A549 (cell line): ENCODE measurements at regions of chr14 and their contacts with region 1.

Region 1: GRCh38 chr14:75088574-75089373 is 19.3 kb downstream of the ZC2HC1C start:
- DNase-seq: peak; percentile 43 to 63
- ATAC-seq: peak; percentile 90 to 94
- H3K4me3 ChIP-seq: no peak overlapping the region
- H3K27ac ChIP-seq: no peak overlapping the region
- H3K4me1 ChIP-seq: no peaks in the 10 kb centered on the region
- CTCF ChIP-seq: peak; percentile 86
- EP300 ChIP-seq: no peak
- POLR2A ChIP-seq: no peak
- RAD21 ChIP-seq: peak; percentile 84 to 93

Region 2: DNA sequence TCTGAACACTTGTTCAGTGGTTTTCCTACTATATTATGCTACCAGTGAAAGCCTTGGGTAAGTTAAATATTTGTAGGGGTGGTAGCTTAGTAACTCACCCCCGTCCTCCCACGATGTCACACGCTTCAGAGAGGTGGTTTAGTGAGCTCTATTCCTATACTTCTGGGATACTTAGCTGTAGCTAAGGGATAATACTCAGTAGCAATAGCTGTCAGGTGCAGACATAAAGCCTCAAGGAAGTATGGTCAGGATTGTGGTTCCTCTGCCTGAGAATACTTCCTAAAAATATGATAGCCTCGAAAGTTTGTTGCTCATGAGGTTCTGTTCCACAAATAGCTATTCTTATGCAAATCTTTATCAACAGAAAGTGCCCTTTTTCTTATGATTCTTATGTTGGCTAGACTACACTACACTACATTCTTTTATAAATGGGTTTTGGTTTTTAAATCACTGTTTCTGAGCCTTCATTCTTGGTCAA is 195.1 kb before region 1 on chr14:
- CTCF ChIA-PET with region 1: interaction called, 10 read pairs
- POLR2A ChIA-PET with region 1: no interaction called
- DNase-seq: no peak
- ATAC-seq: no peak
- H3K4me3 ChIP-seq: no peak overlapping the region
- H3K27ac ChIP-seq: no peak overlapping the region
- H3K4me1 ChIP-seq: peaks cover 3% of the 10 kb centered on the region
- CTCF ChIP-seq: no peak
- EP300 ChIP-seq: no peak
- POLR2A ChIP-seq: no peak
- RAD21 ChIP-seq: no peak

Region 3: GRCh38 chr14:74922739-74923401 is 165.9 kb before region 1 on chr14 and contains the start of gene RPS6KL1:
- CTCF ChIA-PET with region 1: interaction called, 15 read pairs
- POLR2A ChIA-PET with region 1: no interaction called
- DNase-seq: peak; percentile 57 to 80
- ATAC-seq: peak; percentile 76 to 95
- H3K4me3 ChIP-seq: peak within 1 kb of the TSS; percentile 35
- H3K27ac ChIP-seq: peak within 1 kb of the TSS in 1 of 2 experiments; percentile 48; a peak in 2 of 6 replicates
- H3K4me1 ChIP-seq: no peaks in the 10 kb centered on the region
- CTCF ChIP-seq: no peak
- EP300 ChIP-seq: no peak
- POLR2A ChIP-seq: no peak
- RAD21 ChIP-seq: no peak
- polyA plus RNA-seq, gene RPS6KL1: 0.32 and 0.40 TPM in 2 replicates

Region 4: DNA sequence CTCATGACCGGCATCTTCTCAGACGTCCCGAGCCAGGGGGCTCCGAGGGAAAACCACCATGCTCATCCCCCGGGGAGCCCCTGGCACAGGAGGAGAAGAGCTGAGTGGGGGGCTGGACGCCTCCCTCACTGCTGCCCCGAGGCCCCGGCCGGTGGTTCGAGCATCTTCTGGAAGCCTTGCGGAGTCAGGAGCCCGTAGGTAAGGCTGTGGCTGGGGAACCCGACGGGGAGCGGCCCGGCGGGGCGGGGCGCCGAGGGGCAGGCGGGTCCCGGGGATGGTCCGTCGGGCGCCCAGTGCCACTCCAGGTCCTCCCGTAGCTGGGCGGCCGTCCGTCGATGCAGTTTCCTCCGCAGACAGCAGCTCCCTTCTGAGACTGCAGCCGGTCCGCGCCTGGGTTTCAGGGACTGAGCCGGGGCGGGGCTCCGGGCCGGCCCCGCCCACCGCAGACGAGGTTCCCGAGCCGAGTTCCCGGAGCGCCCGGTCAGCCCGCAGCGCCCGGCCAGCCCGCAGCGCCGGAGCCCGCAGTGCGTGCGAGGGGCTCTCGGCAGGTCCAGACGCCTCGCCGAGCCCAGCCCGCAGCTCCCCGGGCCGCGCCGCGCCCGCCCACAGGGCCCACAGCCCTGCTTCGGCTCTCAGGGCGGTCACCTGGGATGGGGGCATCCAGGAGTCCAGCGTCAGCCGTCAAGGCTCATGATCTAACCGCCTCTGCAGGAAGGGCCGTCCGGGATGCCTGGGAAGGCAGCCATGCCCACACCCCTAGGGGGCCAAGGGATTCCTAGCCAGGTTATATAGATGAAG is 133.3 kb before region 1 on chr14 and contains the start of gene PGF:
- CTCF ChIA-PET with region 1: interaction called, 24 read pairs
- POLR2A ChIA-PET with region 1: no interaction called
- DNase-seq: peak; percentile 30 to 50
- ATAC-seq: peak; percentile 77 to 89
- H3K4me3 ChIP-seq: peak within 1 kb of the TSS; percentile 60
- H3K27ac ChIP-seq: peak within 1 kb of the TSS; percentile 60 to 80; a peak in 5 of 6 replicates
- H3K4me1 ChIP-seq: peaks cover 11% of the 10 kb centered on the region
- CTCF ChIP-seq: no peak
- EP300 ChIP-seq: no peak
- POLR2A ChIP-seq: peak; percentile 64
- RAD21 ChIP-seq: no peak
- polyA plus RNA-seq, gene PGF: 0.52 and 0.63 TPM in 2 replicates

Region 5: GRCh38 chr14:75022655-75023054 is 66.1 kb before region 1 on chr14:
- CTCF ChIA-PET with region 1: interaction called, 19 read pairs
- POLR2A ChIA-PET with region 1: no interaction called
- DNase-seq: peak; percentile 53 to 59
- ATAC-seq: peak; percentile 90 to 91
- H3K4me3 ChIP-seq: no peak overlapping the region
- H3K27ac ChIP-seq: no peak overlapping the region
- H3K4me1 ChIP-seq: no peaks in the 10 kb centered on the region
- CTCF ChIP-seq: peak; percentile 18; the same call in 1 of the 3 replicates
- EP300 ChIP-seq: no peak
- POLR2A ChIP-seq: no peak
- RAD21 ChIP-seq: peak in 1 of 2 experiments; percentile 36; a peak in 2 of 5 replicates

Region 6: DNA sequence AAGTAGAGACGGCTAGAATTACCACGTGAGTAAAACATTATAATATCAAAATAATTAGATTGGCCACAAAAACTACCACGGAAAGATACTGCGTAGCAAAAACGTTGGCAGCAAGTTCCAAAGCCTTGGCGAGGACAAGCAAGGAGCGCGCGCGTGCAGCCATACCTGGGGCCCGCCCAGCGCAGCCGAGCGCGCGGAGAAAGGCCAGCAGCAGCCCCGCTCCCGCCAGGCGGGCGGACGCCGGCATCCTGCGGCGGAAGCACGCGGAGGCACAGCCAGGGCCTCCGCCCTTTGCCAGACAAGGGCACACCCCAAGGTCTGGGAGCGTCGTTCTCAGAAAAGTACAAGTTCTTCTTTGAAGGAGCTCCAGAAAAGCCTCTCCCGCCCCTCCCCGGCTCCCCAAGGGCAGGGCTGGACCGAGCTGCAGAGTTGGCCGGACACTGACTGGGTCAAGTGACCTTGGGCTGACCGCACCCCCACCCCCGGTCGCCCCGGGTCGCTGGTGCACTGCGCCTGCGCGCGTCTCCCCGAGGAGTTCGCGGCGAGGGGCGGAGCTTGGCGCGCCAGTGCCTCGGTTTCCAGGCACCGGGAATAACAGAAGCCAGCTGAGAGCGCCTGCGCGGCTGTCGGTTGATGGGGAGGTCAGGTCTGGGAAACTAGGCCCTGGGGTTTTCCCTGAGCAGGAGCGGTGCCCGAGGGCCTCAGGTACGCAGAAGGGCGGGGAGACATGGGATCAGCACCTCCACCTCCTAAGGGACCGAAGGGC is 19.5 kb before region 1 on chr14 and contains the start of gene ZC2HC1C:
- CTCF ChIA-PET with region 1: interaction called, 85 read pairs
- POLR2A ChIA-PET with region 1: interaction called, 3 read pairs
- DNase-seq: peak; percentile 84 to 91
- ATAC-seq: peak; percentile 87 to 92
- H3K4me3 ChIP-seq: peak within 1 kb of the TSS; percentile 61
- H3K27ac ChIP-seq: peak within 1 kb of the TSS; percentile 88 to 95
- H3K4me1 ChIP-seq: peaks cover 19% of the 10 kb centered on the region
- CTCF ChIP-seq: no peak
- EP300 ChIP-seq: no peak
- POLR2A ChIP-seq: no peak; the same call in 1 of the 2 replicates
- RAD21 ChIP-seq: no peak; a peak in 1 of 5 replicates
- polyA plus RNA-seq, gene ZC2HC1C: 2.4 and 2.7 TPM in 2 replicates

Region 7: GRCh38 chr14:75119056-75119455 is 30.3 kb after region 1 on chr14:
- CTCF ChIA-PET with region 1: interaction called, 18 read pairs
- POLR2A ChIA-PET with region 1: no interaction called
- DNase-seq: no peak
- ATAC-seq: no peak
- H3K4me3 ChIP-seq: no peak overlapping the region
- H3K27ac ChIP-seq: no peak overlapping the region
- H3K4me1 ChIP-seq: peaks cover 33% of the 10 kb centered on the region
- CTCF ChIP-seq: no peak
- EP300 ChIP-seq: no peak
- POLR2A ChIP-seq: no peak
- RAD21 ChIP-seq: no peak